ENCODE measurements at regions of chr19 and their contacts with region 1.

Region 1: GRCh38 chr19:1406774-1407499 is 449 bp upstream of the DAZAP1 start:
- DNase-seq: peak; percentile 99
- H3K4me3 ChIP-seq: peak overlapping the region; percentile 89 to 100 (median 100)
- H3K27ac ChIP-seq: peak overlapping the region; percentile 82 to 98 (median 94)
- H3K4me1 ChIP-seq: peaks cover 35 to 57% (median 53%) of the 10 kb centered on the region in 4 donors
- H3K27me3 ChIP-seq: peaks cover 0 to 5% (median 0%) of the 10 kb centered on the region in 4 donors
- CTCF ChIP-seq: peak in 2 of 3 experiments; percentile 21 to 24
- EP300 ChIP-seq: no peak
- POLR2A ChIP-seq: peak; percentile 40

Region 2: GRCh38 chr19:1279782-1280341 is 127.1 kb before region 1 on chr19:
- intact Hi-C with region 1: loop called (anchors 10 kb)
- DNase-seq: no peak
- H3K4me3 ChIP-seq: no peak overlapping the region
- H3K27ac ChIP-seq: peak overlapping the region in 1 of 4 donors; percentile 6
- H3K4me1 ChIP-seq: peaks cover 13 to 35% (median 23%) of the 10 kb centered on the region in 4 donors
- H3K27me3 ChIP-seq: peaks cover 0 to 23% (median 7%) of the 10 kb centered on the region in 4 donors
- CTCF ChIP-seq: peak; percentile 81 to 99 (median 85)
- EP300 ChIP-seq: no peak
- POLR2A ChIP-seq: no peak

Measured in esophagus muscularis mucosa (tissue), 4 donors.